HCT116 (cell line): ENCODE measurements at regions of chr18 and their contacts with region 1.

Region 1: GRCh38 chr18:45664824-45665763 is 49.8 kb downstream of the SLC14A2 start:
- DNase-seq: peak; percentile 37
- ATAC-seq: peak; percentile 85
- H3K4me3 ChIP-seq: no peak overlapping the region
- H3K27ac ChIP-seq: no peak overlapping the region
- H3K4me1 ChIP-seq: no peaks in the 10 kb centered on the region
- H3K27me3 ChIP-seq: no peaks in the 10 kb centered on the region
- CTCF ChIP-seq: peak; percentile 73 to 95 (median 90)
- POLR2A ChIP-seq: no peak
- RAD21 ChIP-seq: peak; percentile 85

Region 2: DNA sequence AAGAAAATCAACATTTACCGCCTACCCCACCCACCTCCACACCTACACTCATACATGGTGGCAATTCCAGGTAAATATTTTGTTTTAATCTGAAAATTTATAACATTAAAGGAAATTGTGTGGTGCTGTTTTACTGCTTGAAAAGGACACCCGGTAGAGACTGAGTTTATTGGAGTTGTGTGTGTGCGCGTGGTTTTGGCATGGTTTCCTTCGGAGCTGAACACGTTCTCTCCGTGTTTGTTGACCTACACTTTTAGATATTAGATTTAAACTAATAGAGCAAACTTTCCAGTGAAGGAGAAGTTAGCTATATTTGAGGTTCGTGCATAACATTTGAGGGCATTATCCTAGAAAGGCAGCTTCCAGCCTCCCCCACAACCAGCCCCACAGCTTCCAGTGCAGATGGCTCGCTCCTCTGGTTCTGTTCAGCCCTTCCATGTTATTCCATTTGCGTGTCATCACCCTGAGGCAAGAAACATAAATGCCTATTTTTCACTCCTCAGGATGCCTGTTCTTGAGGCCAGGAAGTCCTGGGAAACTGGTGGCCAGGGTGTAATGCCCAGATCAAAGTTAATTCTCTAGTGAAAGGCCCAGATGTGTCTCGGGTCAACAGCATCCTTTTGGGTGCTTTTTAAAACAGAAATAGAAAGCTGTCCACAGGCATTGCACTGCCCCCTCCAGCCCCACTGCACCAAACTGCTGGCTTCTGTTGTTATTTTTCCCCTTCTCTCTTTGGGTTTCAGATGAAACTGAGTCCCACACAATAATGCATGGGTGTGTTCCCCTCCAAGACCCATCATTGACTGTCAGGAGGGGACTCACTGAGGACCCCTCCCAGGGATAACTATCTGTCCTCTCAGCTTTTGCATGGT is 794.2 kb before region 1 on chr18:
- CTCF ChIA-PET with region 1: no interaction called
- POLR2A ChIA-PET with region 1: no interaction called
- RAD21 ChIA-PET with region 1: no interaction called
- intact Hi-C with region 1: no loop called
- DNase-seq: no peak
- ATAC-seq: no peak
- H3K4me3 ChIP-seq: no peak overlapping the region
- H3K27ac ChIP-seq: no peak overlapping the region
- H3K4me1 ChIP-seq: no peaks in the 10 kb centered on the region
- H3K27me3 ChIP-seq: no peaks in the 10 kb centered on the region
- CTCF ChIP-seq: no peak
- POLR2A ChIP-seq: no peak
- RAD21 ChIP-seq: no peak

Region 3: DNA sequence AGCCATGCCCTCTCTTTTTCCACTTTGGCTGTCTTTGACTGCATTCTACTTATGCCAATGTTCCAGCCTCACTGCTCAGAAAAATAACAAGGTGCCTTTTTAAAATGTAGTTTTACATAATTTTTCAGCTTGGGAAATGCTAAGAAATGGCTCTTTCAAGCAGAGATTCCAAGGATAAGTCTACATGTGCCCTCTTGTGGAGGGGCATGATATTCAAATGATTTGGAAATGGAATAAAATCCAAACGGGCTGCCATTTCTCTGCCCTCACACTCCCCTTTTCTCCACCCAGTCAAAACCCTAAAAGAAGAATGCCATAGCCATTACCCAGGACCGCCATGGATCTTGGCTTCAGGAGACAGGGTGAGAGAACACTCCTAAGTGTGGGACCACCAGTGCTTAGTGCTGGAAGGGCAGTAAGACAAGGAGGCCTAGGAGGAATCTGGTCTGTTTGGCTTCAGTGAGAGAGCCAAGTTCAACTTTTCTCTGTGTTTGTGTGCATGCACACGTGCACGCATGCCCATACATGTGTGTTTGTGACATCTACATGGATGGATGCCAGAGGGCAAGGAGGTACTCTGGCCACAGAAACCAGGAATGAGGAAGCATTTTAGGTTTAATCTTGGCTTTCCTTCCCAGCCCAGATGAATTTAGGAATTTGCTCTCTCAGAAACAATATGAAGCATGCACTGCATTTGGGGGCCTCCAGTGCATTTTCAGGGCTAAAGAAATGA is 223.8 kb before region 1 on chr18:
- CTCF ChIA-PET with region 1: no interaction called
- POLR2A ChIA-PET with region 1: no interaction called
- RAD21 ChIA-PET with region 1: no interaction called
- intact Hi-C with region 1: no loop called
- DNase-seq: no peak
- ATAC-seq: no peak
- H3K4me3 ChIP-seq: no peak overlapping the region
- H3K27ac ChIP-seq: no peak overlapping the region
- H3K4me1 ChIP-seq: no peaks in the 10 kb centered on the region
- H3K27me3 ChIP-seq: no peaks in the 10 kb centered on the region
- CTCF ChIP-seq: peak in 2 of 3 experiments; percentile 5 to 30; a peak in 2 of 6 replicates
- POLR2A ChIP-seq: no peak
- RAD21 ChIP-seq: 0 out of 2 replicates have a peak, but pooled peaks have one; percentile 21

Region 4: DNA sequence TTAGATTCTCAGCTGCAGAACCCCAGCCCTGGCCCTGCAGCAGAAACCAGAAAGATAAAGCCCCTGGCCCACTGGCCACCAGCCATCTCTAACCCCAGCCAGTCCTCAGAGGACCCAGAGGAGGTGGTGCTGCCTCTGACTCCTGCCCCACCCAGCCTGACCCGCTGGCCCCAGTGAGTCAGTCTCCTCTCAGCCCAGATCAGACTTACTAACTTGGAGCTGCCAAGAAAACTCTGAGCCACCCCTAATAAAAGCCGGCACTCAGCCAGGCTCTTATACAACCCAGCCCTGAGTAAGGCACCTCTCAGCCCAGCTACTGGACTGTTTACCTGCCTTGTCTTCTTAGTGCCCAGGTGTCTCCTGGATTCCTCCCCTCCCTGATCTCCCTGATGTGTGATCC is 47.8 kb before region 1 on chr18:
- CTCF ChIA-PET with region 1: no interaction called
- POLR2A ChIA-PET with region 1: no interaction called
- RAD21 ChIA-PET with region 1: no interaction called
- intact Hi-C with region 1: no loop called
- DNase-seq: peak; percentile 48
- ATAC-seq: peak; percentile 84
- H3K4me3 ChIP-seq: no peak overlapping the region
- H3K27ac ChIP-seq: 0 out of 2 replicates have a peak overlapping the region, but pooled peaks have one; percentile 4
- H3K4me1 ChIP-seq: peaks cover 7 to 15% of the 10 kb centered on the region in 2 experiments
- H3K27me3 ChIP-seq: peaks cover 9% of the 10 kb centered on the region
- CTCF ChIP-seq: no peak
- POLR2A ChIP-seq: no peak
- RAD21 ChIP-seq: no peak

Region 5: DNA sequence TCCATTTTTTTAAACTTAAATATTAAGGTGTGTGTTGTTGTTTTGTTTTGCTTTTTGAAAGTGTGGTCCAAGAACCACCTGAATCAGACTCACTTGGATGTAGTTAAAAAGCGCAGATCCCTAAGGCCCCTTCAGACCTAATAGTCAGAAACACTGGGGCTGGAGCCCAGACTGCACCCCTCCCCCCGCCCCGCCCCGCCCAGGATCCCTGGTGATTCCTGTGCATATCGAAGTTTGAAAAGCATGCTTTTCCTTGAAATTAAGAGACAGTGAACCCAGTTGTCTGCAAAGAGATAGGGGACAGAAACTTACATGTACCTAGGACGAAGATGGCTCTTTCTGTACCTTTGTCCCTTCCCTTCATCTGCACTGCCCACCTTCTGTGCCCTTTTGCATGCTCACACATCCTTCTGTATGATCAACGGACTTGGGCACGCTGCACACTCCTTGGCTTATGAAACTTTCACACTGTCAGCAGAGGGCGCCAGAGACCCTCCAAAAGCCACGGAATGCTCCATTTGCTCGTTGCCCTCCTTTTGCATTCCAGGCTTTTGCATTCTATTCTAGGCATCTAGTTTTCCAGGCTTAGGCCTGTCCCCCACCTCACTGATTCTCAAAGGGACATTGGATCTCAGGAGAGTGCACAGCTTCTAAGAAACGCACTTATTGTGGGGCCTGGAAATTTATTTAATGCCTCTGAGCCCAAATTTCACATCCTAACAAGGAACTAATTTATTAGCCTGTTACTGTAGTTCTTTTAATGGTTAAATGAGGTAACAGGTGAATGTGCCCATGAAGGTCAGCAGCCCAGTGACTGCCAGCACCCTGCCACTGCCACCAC is 26.1 kb after region 1 on chr18:
- CTCF ChIA-PET with region 1: no interaction called
- POLR2A ChIA-PET with region 1: no interaction called
- RAD21 ChIA-PET with region 1: no interaction called
- intact Hi-C with region 1: loop called (anchors 1 kb)
- DNase-seq: peak; percentile 62
- ATAC-seq: peak; percentile 98
- H3K4me3 ChIP-seq: no peak overlapping the region
- H3K27ac ChIP-seq: no peak overlapping the region
- H3K4me1 ChIP-seq: peaks cover 0 to 5% of the 10 kb centered on the region in 2 experiments; a peak in 1 of 4 replicates
- H3K27me3 ChIP-seq: no peaks in the 10 kb centered on the region
- CTCF ChIP-seq: peak; percentile 79 to 91 (median 84)
- POLR2A ChIP-seq: no peak
- RAD21 ChIP-seq: peak; percentile 93

Region 6: DNA sequence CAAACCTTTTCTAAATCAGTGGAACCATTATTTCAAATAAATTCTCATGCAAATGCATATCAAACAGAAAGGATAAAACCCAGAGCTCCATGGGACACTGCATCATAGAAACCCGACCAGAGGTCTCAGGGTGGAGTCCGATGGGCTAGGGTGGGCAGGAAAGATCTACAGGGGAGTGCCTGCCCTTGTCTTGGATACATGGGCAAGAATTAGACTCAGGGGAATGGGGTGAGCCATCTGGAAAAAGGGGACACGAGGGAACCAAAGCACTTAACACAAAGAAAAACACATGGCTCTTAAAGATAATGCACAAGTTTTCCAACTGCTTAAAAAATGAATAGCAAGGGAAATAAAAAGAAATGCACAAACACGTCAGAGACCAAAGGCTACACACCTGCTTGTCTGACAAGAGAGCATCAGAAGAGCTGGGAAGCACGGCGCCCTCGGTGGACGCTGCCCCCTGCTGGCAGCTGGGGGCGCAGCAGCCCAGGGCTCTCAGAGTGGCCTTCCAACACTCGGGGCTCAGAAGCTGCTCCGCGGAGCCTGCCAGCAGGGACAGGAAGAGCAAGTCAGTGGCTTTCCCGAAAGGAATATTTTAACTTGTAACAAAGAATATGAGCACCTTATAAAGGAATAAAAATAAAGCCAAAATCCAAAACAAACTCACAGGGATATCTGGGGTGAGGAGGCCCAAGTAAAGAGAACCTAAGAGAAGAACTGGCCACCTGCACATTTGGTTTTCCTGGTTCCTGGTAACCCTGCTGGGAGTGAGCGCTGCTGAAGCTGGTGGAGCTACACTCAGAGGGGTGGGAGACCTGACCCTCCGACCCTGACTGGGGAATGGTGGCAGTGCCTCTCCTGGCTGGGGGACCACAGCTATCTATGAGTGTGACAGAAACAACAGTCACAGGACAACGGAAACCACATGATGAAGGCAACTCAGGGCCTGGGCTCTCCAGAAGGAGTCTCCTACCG is 214.9 kb after region 1 on chr18:
- CTCF ChIA-PET with region 1: interaction called, 12 read pairs
- POLR2A ChIA-PET with region 1: no interaction called
- RAD21 ChIA-PET with region 1: interaction called in 1 of 2 experiments, 3 read pairs
- intact Hi-C with region 1: no loop called
- DNase-seq: peak; percentile 23
- ATAC-seq: peak; percentile 99
- H3K4me3 ChIP-seq: no peak overlapping the region
- H3K27ac ChIP-seq: no peak overlapping the region
- H3K4me1 ChIP-seq: no peaks in the 10 kb centered on the region
- H3K27me3 ChIP-seq: no peaks in the 10 kb centered on the region
- CTCF ChIP-seq: peak; percentile 80 to 99 (median 99)
- POLR2A ChIP-seq: no peak
- RAD21 ChIP-seq: peak; percentile 80

Region 7: DNA sequence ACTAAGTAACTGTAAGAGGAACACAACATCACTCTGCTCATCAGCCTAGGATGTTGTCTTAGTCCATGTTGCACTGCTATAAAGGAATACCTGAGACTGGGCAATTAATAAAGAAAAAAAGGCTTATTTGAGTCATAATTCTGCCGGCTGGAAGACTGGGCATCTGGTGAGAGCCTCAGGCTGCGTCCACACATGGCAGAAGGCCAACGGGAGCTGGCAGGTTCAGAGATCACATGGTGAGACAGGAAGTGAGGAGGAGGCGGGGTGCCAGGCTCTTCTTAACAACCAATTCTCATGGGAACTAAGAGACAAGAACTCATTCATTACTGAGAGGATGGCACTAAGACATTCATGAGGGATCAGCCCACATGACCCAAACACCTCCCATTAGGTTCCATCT is 255.3 kb after region 1 on chr18:
- CTCF ChIA-PET with region 1: interaction called, 3 read pairs
- POLR2A ChIA-PET with region 1: no interaction called
- RAD21 ChIA-PET with region 1: no interaction called
- intact Hi-C with region 1: loop called (anchors 1 kb)
- DNase-seq: no peak
- ATAC-seq: no peak
- H3K4me3 ChIP-seq: no peak overlapping the region
- H3K27ac ChIP-seq: no peak overlapping the region
- H3K4me1 ChIP-seq: peaks cover 0 to 4% of the 10 kb centered on the region in 2 experiments; a peak in 1 of 4 replicates
- H3K27me3 ChIP-seq: no peaks in the 10 kb centered on the region
- CTCF ChIP-seq: no peak
- POLR2A ChIP-seq: no peak
- RAD21 ChIP-seq: no peak

Region 8: DNA sequence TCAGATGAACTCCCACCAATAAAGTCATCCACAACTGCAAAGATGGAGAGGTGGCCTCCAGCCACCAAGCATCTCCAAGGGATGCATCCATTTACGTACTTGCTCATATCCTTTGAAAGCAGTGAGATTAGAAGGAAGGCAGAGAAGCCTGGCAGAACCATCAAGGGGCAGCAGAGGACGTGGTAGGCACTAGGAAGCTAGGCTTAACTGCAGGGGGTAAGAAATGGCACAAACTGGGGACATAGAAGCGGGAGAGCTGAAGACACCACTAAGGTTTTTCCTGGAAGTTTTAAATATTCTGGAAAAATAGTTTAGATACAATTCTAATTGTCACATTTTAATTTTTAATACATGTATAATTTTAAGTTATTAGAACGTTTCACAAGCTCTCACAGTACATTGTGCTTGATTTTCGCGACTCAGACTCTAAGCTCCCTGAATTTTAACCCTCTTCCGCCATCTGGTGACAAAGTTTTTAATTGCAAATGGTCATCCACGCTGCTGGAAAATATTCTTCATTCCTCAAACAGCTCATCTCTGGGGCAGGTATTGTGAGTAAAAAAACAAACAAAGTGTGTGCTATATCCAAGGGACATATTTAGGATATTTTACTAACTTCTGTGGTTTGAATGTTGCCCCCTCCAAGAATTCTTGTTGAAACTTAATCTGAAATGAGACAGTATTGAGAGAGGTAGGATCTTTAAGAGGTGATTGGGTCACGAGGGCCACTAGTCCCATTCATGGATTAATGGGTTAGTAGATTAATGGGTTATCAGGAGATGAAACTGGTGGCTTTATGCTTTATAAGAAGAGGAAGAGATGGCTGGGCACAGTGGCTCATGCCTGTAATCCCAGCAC is 408.6 kb after region 1 on chr18:
- CTCF ChIA-PET with region 1: interaction called, 32 read pairs
- POLR2A ChIA-PET with region 1: no interaction called
- RAD21 ChIA-PET with region 1: no interaction called
- intact Hi-C with region 1: loop called (anchors 1 kb)
- DNase-seq: peak; percentile 51
- ATAC-seq: peak; percentile 41
- H3K4me3 ChIP-seq: no peak overlapping the region
- H3K27ac ChIP-seq: no peak overlapping the region
- H3K4me1 ChIP-seq: peaks cover 18 to 38% of the 10 kb centered on the region in 2 experiments
- H3K27me3 ChIP-seq: no peaks in the 10 kb centered on the region
- CTCF ChIP-seq: peak; percentile 48 to 68 (median 58); a peak in 5 of 6 replicates
- POLR2A ChIP-seq: no peak
- RAD21 ChIP-seq: peak; percentile 78